Posterior vena cava (tissue), 2 donors: ENCODE measurements at regions of chrX and their contacts with region 1.

Region 1: GRCh38 chrX:103864886-103865534 is 33.0 kb upstream of the RAB9B start:
- DNase-seq: no peak

Region 2: GRCh38 chrX:103254921-103255493 is 610.0 kb before region 1 on chrX and contains the start of gene TCEAL8:
- intact Hi-C with region 1: loop called in 1 of 2 experiments (anchors 5 kb)
- DNase-seq: peak; percentile 93
- total RNA-seq, gene TCEAL8: 41.1 to 51.6 TPM

Region 3: GRCh38 chrX:103818842-103819619 is 46.0 kb before region 1 on chrX:
- intact Hi-C with region 1: no loop called
- DNase-seq: no peak